Aorta (tissue), 5 donors: ENCODE measurements at regions of chr13 and their contacts with region 1.

Region 1: GRCh38 chr13:97109841-97110492 is 112.2 kb upstream of the MBNL2 start:
- DNase-seq: peak; percentile 94 to 98
- ATAC-seq: peak; percentile 96
- H3K4me3 ChIP-seq: no peak overlapping the region
- H3K27ac ChIP-seq: no peak overlapping the region
- H3K4me1 ChIP-seq: no peaks in the 10 kb centered on the region
- H3K27me3 ChIP-seq: no peaks in the 10 kb centered on the region

Region 2: DNA sequence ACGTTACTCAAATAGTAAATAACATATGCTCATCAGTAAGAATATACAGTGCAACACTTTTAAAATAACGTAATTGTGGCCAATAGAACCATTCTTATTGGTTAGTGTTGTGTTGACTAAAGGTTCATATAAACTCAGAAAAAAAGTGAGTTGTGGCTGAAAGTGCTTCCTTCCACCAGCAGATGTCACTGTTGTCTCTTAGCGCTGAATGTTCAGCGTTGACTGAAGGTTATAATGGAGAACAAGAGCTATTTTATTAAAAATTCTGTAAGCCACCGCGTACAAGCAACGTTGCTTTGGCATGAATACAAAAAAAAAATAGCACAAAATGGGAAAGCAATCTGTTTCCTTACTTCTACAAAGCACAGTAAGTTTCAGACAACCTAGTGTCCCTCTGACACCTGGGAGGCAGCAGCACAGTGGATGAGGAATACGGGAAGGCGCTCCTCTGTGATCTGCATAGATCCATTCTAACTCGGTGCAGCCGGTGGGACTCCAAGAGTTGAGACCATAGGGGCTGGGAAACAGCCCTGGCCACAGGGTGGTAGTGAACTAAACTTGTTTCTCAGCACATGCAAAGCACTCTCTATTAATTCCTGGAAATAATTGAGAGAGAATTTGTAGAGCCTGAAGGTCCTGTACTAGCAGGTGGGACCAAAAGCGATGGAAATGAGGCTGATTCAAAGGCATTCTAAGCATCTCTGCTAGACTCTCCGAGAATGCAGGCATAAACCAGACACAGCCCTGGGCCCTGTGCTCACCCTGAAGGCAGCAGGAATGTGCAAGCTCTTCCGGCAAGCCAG is 91.7 kb before region 1 on chr13:
- intact Hi-C with region 1: loop called in 1 of 2 experiments (anchors 5 kb)
- DNase-seq: no peak
- ATAC-seq: peak; percentile 73
- H3K4me3 ChIP-seq: peak overlapping the region in 1 of 2 donors; percentile 11
- H3K27ac ChIP-seq: no peak overlapping the region
- H3K4me1 ChIP-seq: no peaks in the 10 kb centered on the region
- H3K27me3 ChIP-seq: no peaks in the 10 kb centered on the region

Region 3: DNA sequence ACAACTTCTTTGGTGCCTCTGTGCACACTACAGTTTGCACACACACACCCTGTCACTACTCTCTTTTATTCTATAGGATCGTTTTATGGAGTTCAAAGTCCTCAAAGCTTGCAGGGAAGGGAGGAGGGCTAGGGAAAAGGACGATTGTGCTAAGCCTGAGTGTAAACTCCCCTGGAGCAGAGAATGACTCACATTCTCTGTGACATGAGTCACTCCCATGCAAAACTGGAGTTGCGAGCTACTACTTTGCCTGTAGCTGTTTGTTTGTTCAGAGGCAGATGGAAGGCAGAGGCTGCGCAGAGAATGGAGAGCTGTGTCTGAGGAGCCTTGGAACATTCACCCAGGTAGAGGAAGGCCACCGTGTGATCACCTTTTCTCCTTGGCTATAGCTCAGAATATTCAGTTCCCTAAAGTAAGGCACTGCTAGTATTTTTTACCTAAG is 31.6 kb after region 1 on chr13:
- intact Hi-C with region 1: no loop called
- DNase-seq: no peak
- ATAC-seq: peak; percentile 83
- H3K4me3 ChIP-seq: no peak overlapping the region
- H3K27ac ChIP-seq: no peak overlapping the region
- H3K4me1 ChIP-seq: no peaks in the 10 kb centered on the region
- H3K27me3 ChIP-seq: no peaks in the 10 kb centered on the region

Region 4: GRCh38 chr13:97221989-97222700 is 112.2 kb after region 1 on chr13 and contains the start of gene MBNL2:
- intact Hi-C with region 1: loop called (anchors 1 to 2 kb)
- DNase-seq: peak; percentile 94 to 96
- ATAC-seq: peak; percentile 94
- H3K4me3 ChIP-seq: peak within 1 kb of the TSS; percentile 96 to 100
- H3K27ac ChIP-seq: peak within 1 kb of the TSS; percentile 68 to 91
- H3K4me1 ChIP-seq: peaks cover 0 to 4% of the 10 kb centered on the region in 2 donors
- H3K27me3 ChIP-seq: no peaks in the 10 kb centered on the region
- total RNA-seq, gene MBNL2: 73.4 to 79.4 TPM

Region 5: GRCh38 chr13:97359181-97360057 is 249.5 kb after region 1 on chr13:
- intact Hi-C with region 1: loop called (anchors 5 kb)
- DNase-seq: no peak
- ATAC-seq: peak; percentile 90
- H3K4me3 ChIP-seq: no peak overlapping the region
- H3K27ac ChIP-seq: no peak overlapping the region
- H3K4me1 ChIP-seq: no peaks in the 10 kb centered on the region
- H3K27me3 ChIP-seq: no peaks in the 10 kb centered on the region

Region 6: DNA sequence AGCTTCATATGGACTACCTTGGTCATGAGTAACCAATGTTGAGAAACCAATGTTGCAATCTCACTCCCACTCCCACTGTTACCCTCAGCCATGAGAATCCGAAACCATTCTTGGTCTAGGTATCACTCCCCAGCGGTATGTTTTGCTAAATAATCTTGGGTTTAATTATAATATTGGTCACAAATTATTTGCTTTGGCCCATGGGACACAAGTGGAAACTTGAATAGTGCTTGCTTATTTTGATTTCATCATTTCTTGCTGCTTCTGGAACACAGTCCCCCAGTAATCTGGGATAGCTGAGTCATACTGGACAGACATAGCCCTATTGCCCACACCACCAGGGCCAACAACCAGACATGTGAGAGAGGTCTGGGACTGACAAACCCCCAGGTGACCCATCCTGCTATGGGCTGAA is 671.9 kb after region 1 on chr13:
- intact Hi-C with region 1: loop called in 1 of 2 experiments (anchors 10 kb)
- DNase-seq: peak in 1 of 2 donors; percentile 73
- ATAC-seq: peak; percentile 82
- H3K4me3 ChIP-seq: no peak overlapping the region
- H3K27ac ChIP-seq: peak overlapping the region; percentile 89 to 97
- H3K4me1 ChIP-seq: peaks cover 2 to 5% of the 10 kb centered on the region in 2 donors
- H3K27me3 ChIP-seq: no peaks in the 10 kb centered on the region